B cell (primary cell): ENCODE measurements at regions of chr3 and their contacts with region 1.

Region 1: GRCh38 chr3:150721285-150722130 is 17.8 kb upstream of the ERICH6 start:
- DNase-seq: peak; percentile 82
- ATAC-seq: peak; percentile 95
- H3K4me3 ChIP-seq: no peak overlapping the region
- H3K4me3 Mint-ChIP-seq: no peak overlapping the region
- H3K27ac ChIP-seq: no peak overlapping the region
- H3K27ac Mint-ChIP-seq: no peak overlapping the region
- H3K4me1 ChIP-seq: peaks cover 0 to 5% of the 10 kb centered on the region in 2 donors
- H3K4me1 Mint-ChIP-seq: peaks cover 2% of the 10 kb centered on the region
- H3K27me3 ChIP-seq: no peaks in the 10 kb centered on the region
- H3K27me3 Mint-ChIP-seq: no peaks in the 10 kb centered on the region
- CTCF ChIP-seq: peak; percentile 89

Region 2: GRCh38 chr3:150038830-150039229 is 682.7 kb before region 1 on chr3:
- CTCF ChIA-PET with region 1: no interaction called
- POLR2A ChIA-PET with region 1: no interaction called
- intact Hi-C with region 1: no loop called
- DNase-seq: no peak
- ATAC-seq: no peak
- H3K4me3 ChIP-seq: no peak overlapping the region
- H3K4me3 Mint-ChIP-seq: no peak overlapping the region
- H3K27ac ChIP-seq: no peak overlapping the region
- H3K27ac Mint-ChIP-seq: no peak overlapping the region
- H3K4me1 ChIP-seq: no peaks in the 10 kb centered on the region
- H3K4me1 Mint-ChIP-seq: no peaks in the 10 kb centered on the region
- H3K27me3 ChIP-seq: no peaks in the 10 kb centered on the region
- H3K27me3 Mint-ChIP-seq: peaks cover 14% of the 10 kb centered on the region
- CTCF ChIP-seq: no peak

Region 3: GRCh38 chr3:150528354-150528797 is 193.1 kb before region 1 on chr3:
- CTCF ChIA-PET with region 1: no interaction called
- POLR2A ChIA-PET with region 1: no interaction called
- intact Hi-C with region 1: loop called (anchors 1 kb)
- DNase-seq: peak; percentile 47
- ATAC-seq: no peak
- H3K4me3 ChIP-seq: no peak overlapping the region
- H3K4me3 Mint-ChIP-seq: no peak overlapping the region
- H3K27ac ChIP-seq: no peak overlapping the region
- H3K27ac Mint-ChIP-seq: no peak overlapping the region
- H3K4me1 ChIP-seq: no peaks in the 10 kb centered on the region
- H3K4me1 Mint-ChIP-seq: no peaks in the 10 kb centered on the region
- H3K27me3 ChIP-seq: no peaks in the 10 kb centered on the region
- H3K27me3 Mint-ChIP-seq: peaks cover under 1% of the 10 kb centered on the region
- CTCF ChIP-seq: peak; percentile 70

Region 4: DNA sequence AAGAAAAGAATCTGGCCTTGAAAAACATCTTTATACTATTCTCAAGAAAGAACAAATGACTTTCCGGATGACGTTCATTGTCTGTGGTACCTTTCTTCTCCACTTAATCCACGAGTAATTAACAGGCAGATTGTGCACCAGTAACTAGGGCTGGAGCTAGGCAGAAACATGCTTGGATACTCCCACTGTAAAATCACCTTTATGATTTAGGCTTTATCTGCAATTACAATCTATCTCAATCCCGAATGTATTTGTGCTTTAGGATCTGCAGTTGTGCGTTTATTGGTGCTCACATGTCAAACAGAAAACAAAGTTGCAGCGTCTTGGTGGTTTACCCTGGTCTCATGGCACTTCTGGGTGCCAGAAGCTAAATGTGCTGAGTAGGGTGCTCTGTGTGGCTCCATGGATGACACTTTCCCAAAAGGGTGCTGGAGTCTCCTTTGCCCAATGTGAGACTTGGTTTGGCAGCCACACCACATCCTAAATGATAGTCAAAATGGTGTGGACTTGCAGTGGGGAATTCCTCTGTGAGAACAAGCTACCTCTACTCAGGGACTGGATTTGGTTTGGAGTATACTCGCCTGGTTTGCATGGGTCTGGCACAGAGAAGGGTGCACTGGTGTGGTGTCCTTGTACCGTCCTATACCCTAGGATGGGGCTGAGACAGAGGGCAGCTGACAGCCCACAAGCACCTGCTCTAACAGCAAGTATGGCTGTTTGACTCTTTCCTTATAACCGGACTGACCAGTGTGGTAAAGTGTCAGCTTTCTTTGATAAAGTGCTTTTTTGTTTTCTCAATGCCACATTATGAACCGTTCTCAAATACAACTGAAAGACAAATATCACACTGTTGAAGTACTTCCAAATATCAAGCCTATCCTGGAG is 182.9 kb before region 1 on chr3:
- CTCF ChIA-PET with region 1: no interaction called
- POLR2A ChIA-PET with region 1: no interaction called
- intact Hi-C with region 1: no loop called
- DNase-seq: no peak
- ATAC-seq: no peak
- H3K4me3 ChIP-seq: no peak overlapping the region
- H3K4me3 Mint-ChIP-seq: no peak overlapping the region
- H3K27ac ChIP-seq: no peak overlapping the region
- H3K27ac Mint-ChIP-seq: no peak overlapping the region
- H3K4me1 ChIP-seq: no peaks in the 10 kb centered on the region
- H3K4me1 Mint-ChIP-seq: peaks cover 2% of the 10 kb centered on the region
- H3K27me3 ChIP-seq: no peaks in the 10 kb centered on the region
- H3K27me3 Mint-ChIP-seq: no peaks in the 10 kb centered on the region
- CTCF ChIP-seq: no peak

Region 5: DNA sequence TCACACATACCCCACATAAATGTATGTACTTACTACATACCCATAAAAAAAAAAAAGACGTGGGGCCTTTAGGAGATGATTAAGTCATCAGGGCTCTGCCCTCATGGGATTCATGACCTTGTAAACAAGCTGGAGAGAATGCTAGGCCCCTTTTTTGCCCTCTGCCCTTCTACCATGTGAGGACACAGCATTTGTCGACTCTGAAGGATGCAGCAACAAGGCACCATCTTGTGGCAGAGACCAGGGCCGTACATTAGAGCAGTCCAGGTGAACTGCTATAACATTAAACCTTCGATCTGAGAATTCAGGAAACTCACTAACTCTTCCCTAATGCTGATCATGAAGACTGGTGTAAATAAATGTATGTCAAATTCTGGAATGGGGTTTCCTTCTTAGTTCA is 72.1 kb after region 1 on chr3:
- CTCF ChIA-PET with region 1: interaction called, 19 read pairs
- POLR2A ChIA-PET with region 1: no interaction called
- intact Hi-C with region 1: no loop called
- DNase-seq: no peak
- ATAC-seq: no peak
- H3K4me3 ChIP-seq: no peak overlapping the region
- H3K4me3 Mint-ChIP-seq: no peak overlapping the region
- H3K27ac ChIP-seq: no peak overlapping the region
- H3K27ac Mint-ChIP-seq: no peak overlapping the region
- H3K4me1 ChIP-seq: peaks cover 3 to 7% of the 10 kb centered on the region in 2 donors
- H3K4me1 Mint-ChIP-seq: peaks cover 4% of the 10 kb centered on the region
- H3K27me3 ChIP-seq: no peaks in the 10 kb centered on the region
- H3K27me3 Mint-ChIP-seq: peaks cover 10% of the 10 kb centered on the region
- CTCF ChIP-seq: no peak

Region 6: DNA sequence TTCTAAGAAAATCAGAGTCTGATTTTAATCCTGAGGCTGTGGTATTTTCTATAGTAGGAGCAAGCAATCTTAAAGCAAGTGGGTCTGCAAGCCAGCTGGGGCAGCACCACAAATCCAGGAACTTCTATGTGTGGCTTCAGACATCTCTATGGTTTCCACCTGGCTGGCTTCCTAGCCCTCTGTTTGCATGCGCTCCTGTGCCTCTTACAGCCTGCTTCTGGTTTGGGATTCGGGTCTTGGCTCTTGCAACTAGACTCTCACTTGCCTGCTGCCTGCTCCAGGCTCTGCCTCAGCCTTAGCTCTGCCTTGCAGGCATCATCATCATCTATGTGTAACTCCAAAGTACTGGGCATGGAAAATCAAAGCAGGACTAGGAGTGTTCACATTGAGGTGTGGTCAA is 140.3 kb after region 1 on chr3:
- CTCF ChIA-PET with region 1: interaction called, 70 read pairs
- POLR2A ChIA-PET with region 1: no interaction called
- intact Hi-C with region 1: no loop called
- DNase-seq: no peak
- ATAC-seq: no peak
- H3K4me3 ChIP-seq: no peak overlapping the region
- H3K4me3 Mint-ChIP-seq: no peak overlapping the region
- H3K27ac ChIP-seq: no peak overlapping the region
- H3K27ac Mint-ChIP-seq: no peak overlapping the region
- H3K4me1 ChIP-seq: no peaks in the 10 kb centered on the region
- H3K4me1 Mint-ChIP-seq: peaks cover 3% of the 10 kb centered on the region
- H3K27me3 ChIP-seq: no peaks in the 10 kb centered on the region
- H3K27me3 Mint-ChIP-seq: peaks cover 21% of the 10 kb centered on the region
- CTCF ChIP-seq: no peak

Region 7: DNA sequence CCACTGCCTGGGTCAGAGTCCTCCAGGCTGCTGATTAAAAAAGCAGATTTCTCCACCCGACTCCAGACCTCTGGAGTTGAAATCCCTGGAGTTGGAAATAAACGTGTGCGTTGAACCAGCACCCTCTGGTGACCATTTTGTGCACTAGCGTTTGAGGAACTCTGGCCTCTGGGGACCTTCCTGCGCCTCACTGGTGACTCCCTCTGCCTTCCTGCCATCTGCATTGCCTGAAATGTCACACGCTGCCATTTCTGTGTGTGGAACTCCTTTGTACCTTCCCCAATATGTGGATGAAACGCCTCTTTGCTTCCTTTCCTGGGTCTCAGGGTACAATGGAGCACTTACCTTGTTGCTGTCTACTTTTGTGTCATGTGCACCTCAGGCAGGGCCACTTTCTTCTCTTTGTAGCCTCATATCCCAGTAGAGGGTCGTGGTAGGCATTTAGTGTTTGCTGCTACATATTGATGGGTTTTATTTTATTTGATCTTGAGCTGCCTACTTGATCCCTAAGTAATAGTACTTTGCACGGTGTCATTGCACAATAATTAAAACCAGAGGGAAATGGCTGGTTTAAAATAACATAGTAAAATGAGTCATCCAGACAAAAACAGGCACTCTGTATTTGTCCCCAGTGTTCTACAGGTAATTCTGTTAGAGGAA is 424.7 kb after region 1 on chr3:
- CTCF ChIA-PET with region 1: interaction called, 32 read pairs
- POLR2A ChIA-PET with region 1: interaction called, 3 read pairs
- intact Hi-C with region 1: loop called (anchors 1 kb)
- DNase-seq: peak; percentile 80
- ATAC-seq: peak; percentile 99
- H3K4me3 ChIP-seq: peak overlapping the region in 3 of 5 experiments; percentile 7 to 48 (median 29)
- H3K4me3 Mint-ChIP-seq: no peak overlapping the region
- H3K27ac ChIP-seq: no peak overlapping the region
- H3K27ac Mint-ChIP-seq: no peak overlapping the region
- H3K4me1 ChIP-seq: peaks cover 9 to 17% of the 10 kb centered on the region in 2 donors
- H3K4me1 Mint-ChIP-seq: peaks cover 4% of the 10 kb centered on the region
- H3K27me3 ChIP-seq: peaks cover 0 to 4% (median 0%) of the 10 kb centered on the region in 4 experiments
- H3K27me3 Mint-ChIP-seq: peaks cover 3% of the 10 kb centered on the region
- CTCF ChIP-seq: peak; percentile 86